H1 (cell line): ENCODE measurements at regions of chr3 and their contacts with region 1.

Region 1: DNA sequence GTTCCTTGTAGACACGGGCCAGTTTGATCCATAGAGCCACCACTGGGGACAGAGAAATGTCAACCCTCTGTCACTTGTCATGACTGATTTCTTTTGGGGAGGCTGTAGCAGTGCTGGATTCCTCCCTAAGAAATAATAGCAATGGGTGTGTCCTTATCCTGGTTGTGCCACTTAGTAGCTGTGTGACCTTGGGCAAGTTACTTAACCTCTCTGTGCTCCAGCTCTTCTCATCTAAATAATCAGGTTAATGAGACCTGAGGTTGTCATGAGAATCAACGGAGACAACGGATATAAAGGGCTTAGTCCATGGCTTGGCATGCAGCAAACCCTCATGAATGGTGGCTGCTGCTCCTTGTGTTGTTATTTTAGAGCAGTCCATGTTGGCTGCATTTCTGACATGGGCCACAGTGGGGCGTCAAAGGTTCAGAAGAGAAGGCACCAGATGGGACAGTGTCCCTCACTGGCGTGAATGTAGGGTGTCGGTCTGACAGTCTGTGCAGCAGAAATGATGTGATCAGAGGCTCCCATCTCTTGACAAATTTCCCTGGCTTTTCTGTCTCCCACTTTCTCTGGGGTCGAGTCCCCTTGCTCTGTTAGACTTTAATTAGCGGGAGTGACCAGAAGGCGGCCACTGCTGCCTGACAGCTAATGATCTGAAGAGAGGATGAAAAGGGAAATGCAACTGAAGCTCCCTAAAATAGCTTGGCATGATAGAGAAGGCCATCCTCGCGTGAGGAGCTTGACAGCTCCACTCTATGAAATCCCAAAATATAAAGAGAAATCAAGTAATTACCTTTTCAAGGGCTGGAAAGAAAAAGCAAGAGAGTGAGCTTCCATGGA is 209.4 kb downstream of the CADPS start:
- DNase-seq: peak; percentile 56 to 96
- H3K4me3 ChIP-seq: no peak overlapping the region
- H3K27ac ChIP-seq: no peak overlapping the region
- H3K4me1 ChIP-seq: peaks cover 0 to 5% (median 2%) of the 10 kb centered on the region in 4 experiments; a peak in 4 of 7 replicates
- H3K27me3 ChIP-seq: no peaks in the 10 kb centered on the region
- CTCF ChIP-seq: peak; percentile 83 to 96 (median 95)
- EP300 ChIP-seq: no peak
- POLR2A ChIP-seq: no peak
- RAD21 ChIP-seq: peak; percentile 99

Region 2: GRCh38 chr3:62653796-62654195 is 12.0 kb before region 1 on chr3:
- CTCF ChIA-PET with region 1: interaction called, 62 read pairs
- POLR2A ChIA-PET with region 1: interaction called, 4 read pairs
- DNase-seq: no peak
- H3K4me3 ChIP-seq: no peak overlapping the region
- H3K27ac ChIP-seq: no peak overlapping the region
- H3K4me1 ChIP-seq: no peaks in the 10 kb centered on the region
- H3K27me3 ChIP-seq: peaks cover 0 to 1% (median 0%) of the 10 kb centered on the region in 4 experiments; a peak in 1 of 7 replicates
- CTCF ChIP-seq: no peak
- EP300 ChIP-seq: no peak
- POLR2A ChIP-seq: no peak
- RAD21 ChIP-seq: no peak

Region 3: GRCh38 chr3:62703465-62704167 is 37.8 kb after region 1 on chr3:
- CTCF ChIA-PET with region 1: interaction called, 12 read pairs
- POLR2A ChIA-PET with region 1: no interaction called
- DNase-seq: no peak
- H3K4me3 ChIP-seq: no peak overlapping the region
- H3K27ac ChIP-seq: no peak overlapping the region
- H3K4me1 ChIP-seq: peaks cover 0 to 3% (median 3%) of the 10 kb centered on the region in 4 experiments; a peak in 3 of 7 replicates
- H3K27me3 ChIP-seq: no peaks in the 10 kb centered on the region
- CTCF ChIP-seq: no peak
- EP300 ChIP-seq: no peak
- POLR2A ChIP-seq: no peak
- RAD21 ChIP-seq: no peak

Region 4: GRCh38 chr3:62771331-62772072 is 105.7 kb after region 1 on chr3:
- CTCF ChIA-PET with region 1: interaction called, 11 read pairs
- POLR2A ChIA-PET with region 1: no interaction called
- DNase-seq: no peak
- H3K4me3 ChIP-seq: no peak overlapping the region
- H3K27ac ChIP-seq: no peak overlapping the region
- H3K4me1 ChIP-seq: no peaks in the 10 kb centered on the region
- H3K27me3 ChIP-seq: no peaks in the 10 kb centered on the region
- CTCF ChIP-seq: no peak
- EP300 ChIP-seq: no peak
- POLR2A ChIP-seq: no peak
- RAD21 ChIP-seq: no peak

Region 5: GRCh38 chr3:62818347-62818746 is 152.5 kb after region 1 on chr3:
- CTCF ChIA-PET with region 1: interaction called, 12 read pairs
- POLR2A ChIA-PET with region 1: no interaction called
- DNase-seq: no peak
- H3K4me3 ChIP-seq: no peak overlapping the region
- H3K27ac ChIP-seq: no peak overlapping the region
- H3K4me1 ChIP-seq: no peaks in the 10 kb centered on the region
- H3K27me3 ChIP-seq: no peaks in the 10 kb centered on the region
- CTCF ChIP-seq: no peak
- EP300 ChIP-seq: no peak
- POLR2A ChIP-seq: no peak
- RAD21 ChIP-seq: no peak

Region 6: GRCh38 chr3:62863653-62864052 is 197.8 kb after region 1 on chr3:
- CTCF ChIA-PET with region 1: interaction called, 11 read pairs
- POLR2A ChIA-PET with region 1: no interaction called
- DNase-seq: no peak
- H3K4me3 ChIP-seq: no peak overlapping the region
- H3K27ac ChIP-seq: no peak overlapping the region
- H3K4me1 ChIP-seq: peaks cover 0 to 8% (median 4%) of the 10 kb centered on the region in 4 experiments; a peak in 4 of 7 replicates
- H3K27me3 ChIP-seq: no peaks in the 10 kb centered on the region
- CTCF ChIP-seq: peak in 1 of 3 experiments; percentile 26; a peak in 1 of 4 replicates
- EP300 ChIP-seq: no peak
- POLR2A ChIP-seq: no peak
- RAD21 ChIP-seq: peak; percentile 48 to 55

Region 7: GRCh38 chr3:63193629-63194028 is 527.8 kb after region 1 on chr3:
- CTCF ChIA-PET with region 1: interaction called, 60 read pairs
- POLR2A ChIA-PET with region 1: interaction called, 3 read pairs
- DNase-seq: no peak
- H3K4me3 ChIP-seq: no peak overlapping the region
- H3K27ac ChIP-seq: no peak overlapping the region
- H3K4me1 ChIP-seq: no peaks in the 10 kb centered on the region
- H3K27me3 ChIP-seq: no peaks in the 10 kb centered on the region
- CTCF ChIP-seq: peak in 2 of 3 experiments; percentile 41 to 47; a peak in 2 of 4 replicates
- EP300 ChIP-seq: no peak
- POLR2A ChIP-seq: no peak
- RAD21 ChIP-seq: peak; percentile 81 to 86